ENCODE measurements at regions of chr12 and their contacts with region 1.

Region 1: DNA sequence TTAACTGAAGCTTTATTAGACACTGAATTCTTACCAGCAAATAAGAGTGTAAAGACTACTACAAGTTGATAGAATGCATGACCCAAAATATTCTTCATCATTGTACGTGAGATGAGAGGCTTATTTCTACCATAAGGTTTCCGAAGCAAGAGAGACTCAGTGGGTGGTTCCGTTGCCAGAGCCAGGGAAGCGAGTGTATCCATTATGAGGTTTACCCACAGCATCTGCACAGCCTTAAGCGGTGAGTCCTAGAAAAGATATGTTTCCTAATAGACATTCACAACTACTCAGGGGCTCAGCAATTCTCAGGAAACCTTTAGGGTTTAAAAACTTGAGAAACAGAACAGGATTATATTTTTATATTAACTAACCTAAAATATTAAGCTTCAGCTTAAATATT is 77.8 kb upstream of the POC1B start:
- DNase-seq: no peak
- ATAC-seq: no peak
- H3K4me3 Mint-ChIP-seq: no peak overlapping the region
- H3K27ac Mint-ChIP-seq: no peak overlapping the region
- H3K4me1 Mint-ChIP-seq: peaks cover 3% of the 10 kb centered on the region
- H3K27me3 Mint-ChIP-seq: no peaks in the 10 kb centered on the region
- CTCF ChIP-seq: no peak

Region 2: DNA sequence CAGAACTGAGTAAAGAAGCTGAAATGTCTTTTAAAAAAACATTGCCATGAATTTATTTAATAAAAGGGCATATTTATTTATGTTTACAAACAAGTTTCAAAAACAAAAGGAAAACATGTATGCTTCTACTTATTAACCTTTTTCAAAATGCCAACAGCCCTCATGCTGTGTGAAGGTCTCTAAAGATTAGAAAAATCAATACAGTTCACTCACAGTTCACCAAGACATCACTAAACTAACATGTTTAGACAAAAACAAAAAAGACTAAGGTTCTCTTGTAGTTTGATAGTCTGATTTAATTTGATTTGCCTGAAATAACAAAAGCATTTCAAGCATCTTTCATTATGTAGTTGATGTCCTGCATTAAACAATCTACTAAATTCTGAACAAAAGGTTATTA is 13.9 kb before region 1 on chr12:
- CTCF ChIA-PET with region 1: no interaction called
- POLR2A ChIA-PET with region 1: no interaction called
- intact Hi-C with region 1: loop called (anchors 2 kb)
- DNase-seq: no peak
- ATAC-seq: no peak
- H3K4me3 Mint-ChIP-seq: no peak overlapping the region
- H3K27ac Mint-ChIP-seq: no peak overlapping the region
- H3K4me1 Mint-ChIP-seq: no peaks in the 10 kb centered on the region
- H3K27me3 Mint-ChIP-seq: no peaks in the 10 kb centered on the region
- CTCF ChIP-seq: no peak

Region 3: DNA sequence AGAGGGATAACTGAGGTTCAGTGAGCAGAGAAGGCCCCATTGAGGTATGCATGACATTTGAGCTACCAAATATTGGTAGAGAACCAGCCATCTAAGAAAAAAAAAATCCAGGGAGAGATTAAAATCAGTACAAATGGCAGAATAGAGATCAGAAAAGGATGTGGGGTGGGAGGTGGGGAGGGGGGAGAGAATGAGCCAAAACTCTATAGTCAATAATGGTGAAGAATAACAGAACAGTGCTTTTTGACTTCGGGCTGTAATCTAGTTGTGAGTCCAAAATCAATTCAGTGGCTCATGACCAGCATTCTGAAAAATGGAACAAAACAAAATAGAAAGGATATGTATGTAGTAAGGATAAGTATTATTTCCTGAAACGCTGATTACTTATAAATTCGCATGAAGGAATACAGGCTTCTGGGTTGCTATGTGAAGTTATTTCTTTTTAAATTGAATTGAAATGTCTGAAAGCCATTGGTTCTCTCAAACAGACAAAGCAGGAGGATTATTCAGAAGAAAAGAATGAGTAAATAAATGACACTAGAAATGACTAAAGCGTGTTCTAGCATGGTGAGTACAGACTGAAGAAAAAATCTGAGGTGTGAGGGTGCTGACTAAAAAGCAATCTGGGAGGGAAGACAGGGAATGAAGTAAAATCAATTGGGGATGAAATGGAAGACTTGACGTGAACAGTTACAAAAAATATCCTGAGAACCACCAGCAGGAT is 32.5 kb after region 1 on chr12:
- CTCF ChIA-PET with region 1: no interaction called
- POLR2A ChIA-PET with region 1: no interaction called
- intact Hi-C with region 1: loop called (anchors 5 kb)
- DNase-seq: no peak
- ATAC-seq: no peak
- H3K4me3 Mint-ChIP-seq: no peak overlapping the region
- H3K27ac Mint-ChIP-seq: peak overlapping the region; percentile 19
- H3K4me1 Mint-ChIP-seq: peaks cover 5% of the 10 kb centered on the region
- H3K27me3 Mint-ChIP-seq: no peaks in the 10 kb centered on the region
- CTCF ChIP-seq: no peak

Region 4: DNA sequence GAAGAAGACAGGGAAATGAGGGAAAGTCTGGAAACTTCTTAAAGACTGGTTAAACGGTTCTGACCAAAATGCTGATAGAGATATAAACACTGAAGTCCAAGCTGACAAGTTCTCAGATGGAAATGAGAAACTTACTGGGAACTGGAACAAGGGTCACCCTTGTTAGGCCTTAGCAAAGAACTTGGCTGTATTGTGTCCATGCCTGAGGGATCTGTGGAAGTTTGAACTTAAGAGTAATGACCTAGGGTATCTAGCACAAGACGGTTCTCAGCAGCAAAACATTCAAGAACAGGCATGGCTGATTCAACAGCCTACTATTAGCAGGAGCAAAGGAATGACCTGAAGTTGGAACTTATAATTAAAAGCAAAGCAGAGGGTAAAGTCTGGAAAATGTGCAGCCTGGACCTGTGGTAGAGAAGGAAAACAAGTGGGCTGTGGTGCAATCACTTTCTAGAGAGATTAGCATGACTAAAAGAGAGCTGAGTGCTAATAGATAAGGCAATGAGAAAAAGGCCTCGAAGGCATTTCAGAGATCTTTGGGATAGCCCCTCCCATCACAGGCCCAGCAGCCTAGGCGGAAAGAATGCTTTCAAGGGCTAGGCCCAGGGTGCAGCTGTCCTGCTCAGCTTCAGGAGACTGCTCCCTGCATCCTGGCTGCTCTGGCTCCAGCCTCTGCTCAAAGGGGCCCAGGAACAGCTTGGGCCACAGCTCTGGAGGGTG is 44.7 kb after region 1 on chr12:
- CTCF ChIA-PET with region 1: no interaction called
- POLR2A ChIA-PET with region 1: no interaction called
- intact Hi-C with region 1: no loop called
- DNase-seq: no peak
- ATAC-seq: no peak
- H3K4me3 Mint-ChIP-seq: no peak overlapping the region
- H3K27ac Mint-ChIP-seq: peak overlapping the region; percentile 64
- H3K4me1 Mint-ChIP-seq: peaks cover 55% of the 10 kb centered on the region
- H3K27me3 Mint-ChIP-seq: no peaks in the 10 kb centered on the region
- CTCF ChIP-seq: no peak